ENCODE measurements at regions of chr17 and their contacts with region 1.

Region 1: GRCh38 chr17:21457051-21458026 is 81.2 kb downstream of the KCNJ12 start:
- DNase-seq: peak; percentile 96
- ATAC-seq: peak; percentile 92
- H3K4me3 Mint-ChIP-seq: no peak overlapping the region
- H3K27ac Mint-ChIP-seq: peak overlapping the region; percentile 67
- H3K4me1 Mint-ChIP-seq: peaks cover 21% of the 10 kb centered on the region
- H3K27me3 Mint-ChIP-seq: peaks cover 15% of the 10 kb centered on the region

Region 2: GRCh38 chr17:21119247-21119918 is 338.0 kb before region 1 on chr17:
- CTCF ChIA-PET with region 1: no interaction called
- POLR2A ChIA-PET with region 1: no interaction called
- intact Hi-C with region 1: loop called in 1 of 2 experiments (anchors 2 kb)
- DNase-seq: peak; percentile 83
- ATAC-seq: peak; percentile 95
- H3K4me3 Mint-ChIP-seq: peak overlapping the region; percentile 2
- H3K27ac Mint-ChIP-seq: peak overlapping the region; percentile 12
- H3K4me1 Mint-ChIP-seq: peaks cover 7% of the 10 kb centered on the region
- H3K27me3 Mint-ChIP-seq: peaks cover 2% of the 10 kb centered on the region

Region 3: DNA sequence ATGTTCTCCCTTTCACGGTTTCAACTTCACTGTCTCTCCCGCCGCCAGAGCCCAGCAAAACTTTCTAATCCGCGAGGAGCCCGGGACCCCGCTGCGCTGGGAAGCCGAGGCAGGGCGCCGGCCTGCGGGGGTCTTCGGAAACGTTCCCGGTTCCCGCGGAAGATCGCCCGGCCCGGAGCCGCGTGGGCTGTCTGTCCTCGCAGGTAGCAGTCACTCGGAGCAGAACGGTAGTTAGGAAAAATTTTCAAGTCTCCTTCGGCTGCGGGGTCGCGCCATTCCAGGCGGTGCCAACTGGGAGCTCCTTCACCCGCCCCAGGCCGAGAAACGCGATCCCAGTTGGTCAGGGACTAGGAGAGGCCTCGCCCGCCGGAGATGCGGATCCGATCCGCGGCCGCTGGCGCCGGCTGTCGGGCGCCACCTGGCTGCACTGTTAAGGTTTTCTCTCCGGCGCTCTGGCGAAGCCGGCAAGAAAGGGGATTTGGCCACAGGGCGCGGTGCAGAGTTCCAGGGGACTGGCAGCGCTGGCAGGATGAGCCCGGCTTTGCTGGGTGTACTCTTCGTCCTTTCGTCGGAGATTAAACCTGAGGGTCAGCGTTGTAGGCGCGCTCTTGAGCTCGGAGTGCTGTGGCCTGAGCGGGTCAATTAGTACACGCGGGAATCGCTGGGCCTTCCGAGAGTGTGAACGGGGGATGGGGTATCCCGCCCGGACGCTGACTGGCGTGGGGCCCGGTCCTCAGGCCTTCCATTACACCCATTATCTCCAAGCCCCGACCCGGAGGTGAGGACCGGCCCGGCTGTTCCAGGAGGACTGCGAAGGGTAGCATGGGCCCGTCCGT is 54.2 kb after region 1 on chr17:
- CTCF ChIA-PET with region 1: interaction called, 18 read pairs
- POLR2A ChIA-PET with region 1: interaction called, 4 read pairs
- intact Hi-C with region 1: loop called (anchors 1 kb)
- DNase-seq: peak; percentile 82
- ATAC-seq: peak; percentile 87
- H3K4me3 Mint-ChIP-seq: peak overlapping the region; percentile 60
- H3K27ac Mint-ChIP-seq: no peak overlapping the region
- H3K4me1 Mint-ChIP-seq: peaks cover 14% of the 10 kb centered on the region
- H3K27me3 Mint-ChIP-seq: peaks cover 31% of the 10 kb centered on the region

Measured in activated CD4-positive, alpha-beta T cell treated with anti-CD3 and anti-CD28 coated beads for 36 hours (primary cell).